Transverse colon (tissue), 4 donors: ENCODE measurements at regions of chr6 and their contacts with region 1.

Region 1: DNA sequence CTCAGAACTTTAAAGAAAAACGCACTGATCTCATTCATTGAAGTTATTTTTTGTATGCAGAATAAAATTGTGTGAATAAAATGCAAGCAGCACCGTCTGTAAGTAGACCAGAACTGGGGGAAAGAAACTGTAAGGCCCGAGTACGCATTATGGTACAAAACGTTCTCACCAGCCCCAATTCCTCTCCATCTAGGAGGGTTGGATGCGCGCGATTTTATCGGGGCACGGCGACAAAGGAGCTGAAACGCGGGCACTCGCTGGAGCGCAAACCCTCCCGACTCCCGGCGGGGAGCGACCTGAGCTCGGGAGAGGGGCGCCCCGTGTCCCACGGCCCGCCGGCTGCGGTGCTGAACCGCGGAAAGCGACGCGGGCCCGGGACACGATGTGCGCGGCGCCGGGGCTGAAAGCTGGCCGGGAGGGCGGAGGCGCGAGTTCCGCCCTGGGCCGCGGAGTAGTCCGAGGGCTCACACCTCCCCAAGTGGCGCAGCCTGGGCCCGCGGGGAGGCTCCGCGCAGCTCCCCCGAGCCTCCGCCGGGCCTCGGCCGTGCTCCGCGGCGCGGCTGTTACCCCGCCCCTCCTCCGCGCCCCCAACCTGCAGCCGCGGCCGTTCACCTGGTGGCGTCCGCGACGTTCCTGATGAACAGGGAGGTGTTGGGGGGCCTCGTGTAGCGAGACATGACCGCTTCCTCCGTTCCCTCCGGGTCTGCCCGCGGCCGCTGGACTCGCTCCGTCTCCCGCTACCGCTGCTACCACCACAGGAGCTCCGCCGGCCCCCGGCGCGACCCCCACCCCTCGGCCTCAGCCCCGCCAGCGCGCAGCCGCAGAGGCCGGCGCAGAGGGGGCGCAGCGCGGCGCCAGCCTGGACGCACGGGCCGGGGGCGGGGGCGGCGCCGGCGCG is at the start of gene SRSF12:
- DNase-seq: peak; percentile 35
- H3K4me3 ChIP-seq: peak within 1 kb of the TSS; percentile 26 to 83 (median 53)
- H3K27ac ChIP-seq: peak within 1 kb of the TSS; percentile 25 to 50 (median 38)
- H3K4me1 ChIP-seq: peaks cover 2 to 21% (median 5%) of the 10 kb centered on the region in 4 donors
- H3K27me3 ChIP-seq: peaks cover 8% of the 10 kb centered on the region
- CTCF ChIP-seq: no peak
- EP300 ChIP-seq: no peak
- POLR2A ChIP-seq: no peak
- total RNA-seq, gene SRSF12: not detected

Region 2: DNA sequence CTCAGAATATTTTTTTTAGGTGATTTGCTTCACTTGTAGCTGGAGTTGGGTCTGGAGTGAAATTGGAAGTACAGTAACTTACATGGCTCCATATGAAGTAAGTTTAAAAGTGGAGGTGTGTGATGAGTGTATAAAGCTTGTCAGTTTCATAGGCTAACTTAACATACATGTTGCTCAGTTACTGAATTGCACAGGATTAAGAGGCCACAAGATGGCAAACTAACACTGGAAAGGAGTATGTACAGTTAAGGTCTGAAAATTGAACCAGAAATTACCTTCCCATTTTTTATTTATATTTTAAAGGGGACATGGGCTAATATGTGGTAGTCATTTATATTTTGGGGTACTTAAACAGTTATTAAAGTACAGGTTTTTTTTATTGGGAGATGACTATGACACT is 1840.3 kb before region 1 on chr6:
- in situ Hi-C with region 1: no loop called
- intact Hi-C with region 1: no loop called
- DNase-seq: no peak
- H3K4me3 ChIP-seq: no peak overlapping the region
- H3K27ac ChIP-seq: no peak overlapping the region
- H3K4me1 ChIP-seq: peaks cover 0 to 16% (median 1%) of the 10 kb centered on the region in 4 donors
- H3K27me3 ChIP-seq: no peaks in the 10 kb centered on the region
- CTCF ChIP-seq: no peak
- EP300 ChIP-seq: no peak
- POLR2A ChIP-seq: no peak

Region 3: DNA sequence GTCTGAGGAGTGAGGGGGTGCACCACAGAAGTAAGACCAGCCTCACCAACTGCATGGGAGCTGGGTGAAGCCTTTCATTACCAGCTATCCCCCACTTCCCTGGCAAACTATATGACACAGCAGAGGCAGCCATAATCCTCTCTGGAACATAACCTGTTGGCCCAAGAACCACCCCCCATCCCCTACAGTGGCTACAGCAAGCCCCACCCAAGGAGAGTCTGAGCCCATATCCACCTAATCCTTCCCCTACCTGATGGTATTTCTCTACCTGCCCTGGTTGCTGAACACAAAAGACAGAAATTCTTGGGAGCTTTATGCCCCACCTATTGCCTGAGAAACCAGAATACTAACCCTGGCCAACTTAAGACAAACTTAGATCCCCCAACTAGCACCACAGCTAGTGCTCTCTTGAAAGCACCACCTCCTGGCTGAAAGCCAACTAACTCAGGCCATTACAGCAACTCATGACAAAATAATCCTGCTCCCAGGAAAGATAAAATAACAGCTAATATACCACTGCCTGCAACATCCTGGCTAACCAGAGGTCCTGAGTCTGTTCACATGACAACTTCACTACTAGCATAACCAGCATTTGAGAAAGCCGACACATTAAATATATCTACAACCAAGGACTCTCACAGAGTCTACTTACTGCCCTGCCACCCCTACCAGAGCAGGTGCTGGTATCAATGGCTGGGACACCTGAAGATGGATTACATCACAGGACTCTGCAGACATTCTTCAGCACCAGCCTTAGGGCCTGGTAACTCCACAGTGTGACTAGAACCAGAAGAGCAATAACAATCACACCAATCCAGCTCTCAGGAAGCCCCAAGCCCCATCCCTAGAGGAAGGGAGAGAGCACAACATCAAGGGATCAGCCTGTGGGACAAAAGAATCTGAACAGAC is 165.1 kb before region 1 on chr6:
- in situ Hi-C with region 1: no loop called
- intact Hi-C with region 1: no loop called
- DNase-seq: no peak
- H3K4me3 ChIP-seq: no peak overlapping the region
- H3K27ac ChIP-seq: no peak overlapping the region
- H3K4me1 ChIP-seq: no peaks in the 10 kb centered on the region
- H3K27me3 ChIP-seq: no peaks in the 10 kb centered on the region
- CTCF ChIP-seq: no peak
- EP300 ChIP-seq: no peak
- POLR2A ChIP-seq: no peak

Region 4: DNA sequence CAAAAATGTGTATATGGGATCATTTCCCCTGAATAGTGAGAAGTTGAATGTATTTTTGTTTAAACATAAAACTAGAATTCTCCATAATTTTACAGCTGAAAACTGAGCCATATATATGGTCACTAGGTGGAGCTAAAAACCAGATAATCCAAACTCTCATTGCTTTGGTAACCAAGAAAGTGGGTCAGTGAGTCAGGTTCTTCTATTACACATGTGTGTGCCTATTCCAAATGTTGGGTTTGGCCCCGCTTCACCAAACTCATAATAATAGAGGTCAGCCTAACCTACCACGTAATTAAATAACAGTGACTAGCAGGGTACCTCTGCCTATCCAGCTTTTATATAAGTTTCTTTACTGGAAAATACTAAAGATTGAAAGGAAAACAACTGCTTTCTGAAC is 134.7 kb before region 1 on chr6:
- in situ Hi-C with region 1: no loop called
- intact Hi-C with region 1: loop called (anchors 10 kb)
- DNase-seq: no peak
- H3K4me3 ChIP-seq: no peak overlapping the region
- H3K27ac ChIP-seq: no peak overlapping the region
- H3K4me1 ChIP-seq: peaks cover 0 to 7% (median 0%) of the 10 kb centered on the region in 4 donors
- H3K27me3 ChIP-seq: no peaks in the 10 kb centered on the region
- CTCF ChIP-seq: peak; percentile 63 to 76 (median 71)
- EP300 ChIP-seq: no peak
- POLR2A ChIP-seq: no peak

Region 5: GRCh38 chr6:89080542-89081422 is 36.7 kb before region 1 on chr6 and contains the start of gene PNRC1:
- in situ Hi-C with region 1: no loop called
- intact Hi-C with region 1: loop called (anchors 1 kb)
- DNase-seq: peak; percentile 100
- H3K4me3 ChIP-seq: peak within 1 kb of the TSS; percentile 85 to 99 (median 96)
- H3K27ac ChIP-seq: peak within 1 kb of the TSS; percentile 100
- H3K4me1 ChIP-seq: peaks cover 6 to 38% (median 18%) of the 10 kb centered on the region in 4 donors
- H3K27me3 ChIP-seq: no peaks in the 10 kb centered on the region
- CTCF ChIP-seq: peak in 1 of 5 experiments; percentile 8
- EP300 ChIP-seq: no peak
- POLR2A ChIP-seq: peak; percentile 100
- total RNA-seq, gene PNRC1: 99.1 to 281 (median 157) TPM

Region 6: DNA sequence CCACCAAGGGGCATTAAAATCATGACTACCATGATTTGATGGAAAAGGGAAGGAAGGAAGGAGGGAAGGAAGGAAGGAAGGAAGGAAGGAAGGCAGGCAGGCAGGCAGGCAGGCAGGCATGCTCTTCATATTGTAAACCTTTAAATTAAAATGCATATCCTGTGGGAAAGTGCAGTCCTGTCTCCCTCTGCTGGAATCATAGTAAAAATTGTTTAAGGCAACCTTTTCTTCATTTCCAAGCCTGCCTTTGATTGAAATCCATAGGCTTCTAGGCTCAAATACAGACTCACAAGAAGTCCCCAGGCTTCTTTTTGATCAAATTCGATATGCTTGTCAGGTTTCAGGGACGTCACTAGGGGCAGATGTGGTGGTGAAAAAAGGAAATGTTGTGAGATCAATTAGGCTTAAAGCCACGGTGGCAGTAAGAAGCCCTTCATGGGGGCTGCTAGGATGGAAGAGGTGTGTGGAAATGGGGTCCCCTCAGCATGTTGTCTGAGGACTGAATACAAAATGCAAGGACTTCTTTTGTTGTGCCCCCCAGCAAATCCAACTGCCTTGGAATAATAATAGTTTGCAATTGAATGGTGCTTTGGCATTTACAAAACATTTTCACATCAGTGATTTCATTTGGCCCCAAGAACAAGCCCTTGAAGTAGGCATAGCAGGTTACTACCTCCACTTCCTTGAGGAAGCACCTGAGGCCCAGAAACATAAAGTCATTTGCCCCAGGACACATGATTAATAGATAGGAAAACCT is 125.3 kb after region 1 on chr6:
- in situ Hi-C with region 1: loop called in 2 of 4 experiments (anchors 10 to 25 kb)
- intact Hi-C with region 1: loop called (anchors 5 kb)
- DNase-seq: peak; percentile 12
- H3K4me3 ChIP-seq: no peak overlapping the region
- H3K27ac ChIP-seq: no peak overlapping the region
- H3K4me1 ChIP-seq: no peaks in the 10 kb centered on the region
- H3K27me3 ChIP-seq: no peaks in the 10 kb centered on the region
- CTCF ChIP-seq: peak; percentile 45 to 68 (median 50)
- EP300 ChIP-seq: no peak
- POLR2A ChIP-seq: no peak

Region 7: GRCh38 chr6:89290401-89291155 is 173.1 kb after region 1 on chr6:
- in situ Hi-C with region 1: no loop called
- intact Hi-C with region 1: no loop called
- DNase-seq: no peak
- H3K4me3 ChIP-seq: no peak overlapping the region
- H3K27ac ChIP-seq: no peak overlapping the region
- H3K4me1 ChIP-seq: no peaks in the 10 kb centered on the region
- H3K27me3 ChIP-seq: no peaks in the 10 kb centered on the region
- CTCF ChIP-seq: no peak
- EP300 ChIP-seq: no peak
- POLR2A ChIP-seq: no peak

Region 8: DNA sequence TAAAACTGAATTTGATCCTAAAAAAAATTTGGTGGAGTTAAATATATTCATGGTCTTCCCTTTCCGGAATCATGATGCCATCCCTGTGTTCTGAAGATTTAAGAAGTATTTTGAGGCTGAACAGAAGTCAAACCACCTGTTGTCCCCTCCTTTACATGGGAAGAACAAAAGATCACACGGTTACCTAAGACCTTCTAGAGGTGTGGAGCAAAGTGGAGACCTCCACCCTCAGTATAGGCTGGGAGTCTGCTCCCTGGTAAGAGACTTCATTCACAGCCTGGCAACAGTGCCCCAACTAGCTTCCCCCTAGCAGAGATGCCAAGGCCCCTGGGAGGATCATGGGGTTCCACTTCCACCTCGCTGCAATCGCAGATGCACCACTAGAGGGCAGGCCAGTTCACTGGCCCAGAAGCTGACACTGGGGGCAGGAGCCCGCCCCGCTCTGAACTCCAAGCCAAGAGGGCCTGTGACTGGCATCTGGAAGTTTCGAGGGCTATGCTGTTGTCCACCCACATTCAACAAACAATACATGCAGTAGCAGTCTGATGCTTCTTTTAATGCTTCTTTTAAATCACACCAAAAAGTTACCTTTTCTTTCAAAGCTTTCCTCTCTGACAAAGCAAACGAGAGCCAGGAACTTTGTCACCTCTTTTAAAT is 254.5 kb after region 1 on chr6:
- in situ Hi-C with region 1: loop called in 1 of 4 experiments (anchors 25 kb)
- intact Hi-C with region 1: no loop called
- DNase-seq: peak; percentile 85
- H3K4me3 ChIP-seq: no peak overlapping the region
- H3K27ac ChIP-seq: peak overlapping the region; percentile 14 to 53 (median 21)
- H3K4me1 ChIP-seq: peaks cover 0 to 26% (median 12%) of the 10 kb centered on the region in 4 donors
- H3K27me3 ChIP-seq: no peaks in the 10 kb centered on the region
- CTCF ChIP-seq: peak; percentile 78 to 94 (median 91)
- EP300 ChIP-seq: no peak
- POLR2A ChIP-seq: no peak